Sciatic nerve (tissue), 2 donors: ENCODE measurements at regions of chr2 and their contacts with region 1.

Region 1: GRCh38 chr2:130181325-130181879 is at the start of gene SMPD4:
- DNase-seq: peak; percentile 99
- ATAC-seq: peak; percentile 98
- total RNA-seq, gene SMPD4: 40.4 TPM

Region 2: DNA sequence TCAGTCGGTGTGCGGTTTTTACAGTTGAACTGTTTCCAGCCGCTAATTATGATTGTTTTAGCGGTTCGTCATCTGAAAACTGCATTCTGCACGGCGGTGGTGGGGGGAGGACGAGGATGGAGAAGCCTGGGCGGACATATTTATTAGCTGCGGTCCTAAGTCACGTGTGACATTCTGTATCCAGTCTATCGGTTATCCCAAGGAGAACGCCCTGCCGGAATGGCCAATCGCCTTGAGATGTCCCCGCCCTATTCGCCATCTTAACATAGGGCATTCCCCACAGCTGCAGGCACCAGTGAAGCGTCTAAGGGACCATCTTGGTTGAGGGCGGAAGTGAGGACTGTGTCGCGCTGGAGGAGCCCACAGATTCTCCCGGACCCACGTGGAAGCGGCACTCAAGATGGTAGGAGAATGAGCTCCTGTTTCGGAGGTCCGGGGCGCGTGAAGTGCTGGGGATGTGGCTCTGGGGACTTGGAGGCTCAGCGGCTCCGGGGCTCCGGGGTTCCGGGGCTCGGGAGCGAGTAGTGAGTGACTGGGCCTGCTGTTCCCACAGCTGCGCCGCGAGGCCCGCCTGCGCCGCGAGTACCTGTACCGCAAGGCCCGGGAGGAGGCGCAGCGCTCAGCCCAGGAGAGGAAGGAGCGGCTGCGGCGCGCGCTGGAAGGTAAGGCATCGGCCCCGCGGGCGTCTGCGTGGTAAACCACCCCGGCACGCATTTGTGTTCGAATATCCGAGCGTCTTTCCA is 161.3 kb after region 1 on chr2 and contains the start of gene IMP4:
- intact Hi-C with region 1: loop called (anchors 10 kb)
- DNase-seq: peak; percentile 97
- ATAC-seq: peak; percentile 99
- total RNA-seq, gene IMP4: 43.0 TPM